Activated CD8-positive, alpha-beta T cell treated with anti-CD3 and anti-CD28 coated beads, Interleukin-2, amount 10 ng/mL, durations not matched to agents 7 days and 5 days (primary cell): ENCODE measurements at regions of chr12 and their contacts with region 1.

Region 1: DNA sequence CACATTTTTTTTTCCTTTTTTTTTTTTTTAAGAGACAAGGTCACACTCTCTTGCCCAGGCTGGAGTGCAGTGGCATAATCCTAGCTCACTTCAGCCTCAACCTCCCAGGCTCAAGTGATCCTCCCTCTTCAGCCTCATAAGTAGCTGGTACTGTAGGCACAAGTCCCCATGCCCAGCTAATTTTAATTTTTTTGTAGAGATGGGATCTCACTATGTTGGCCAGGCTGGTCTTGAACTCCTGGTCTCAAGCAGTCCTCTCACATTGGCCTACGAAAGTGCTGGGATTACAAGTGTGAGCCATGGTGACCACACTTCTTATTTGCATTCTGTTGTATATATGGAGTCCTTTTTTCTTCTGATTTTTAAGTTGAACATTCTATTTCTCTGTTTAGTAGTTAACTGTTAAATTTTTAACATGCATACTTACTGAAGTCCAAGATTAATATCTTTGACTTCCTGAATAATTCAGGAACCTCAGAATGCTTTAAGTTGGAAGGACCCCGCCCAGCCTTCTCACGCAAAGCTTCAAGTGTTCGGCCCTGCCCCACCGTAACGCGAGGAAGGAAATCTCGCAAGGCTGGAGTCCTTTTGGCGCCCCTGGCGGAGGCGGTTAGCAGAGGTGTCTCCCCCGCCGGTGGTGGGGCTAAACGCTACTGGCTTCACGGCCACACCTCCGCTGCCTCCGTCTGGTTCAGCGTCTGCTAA is 21.6 kb downstream of the SPATS2 start:
- DNase-seq: peak; percentile 80
- ATAC-seq: peak; percentile 94
- H3K4me3 Mint-ChIP-seq: no peak overlapping the region
- H3K27ac Mint-ChIP-seq: no peak overlapping the region
- H3K4me1 Mint-ChIP-seq: peaks cover 6% of the 10 kb centered on the region
- H3K27me3 Mint-ChIP-seq: peaks cover 2% of the 10 kb centered on the region

Region 2: DNA sequence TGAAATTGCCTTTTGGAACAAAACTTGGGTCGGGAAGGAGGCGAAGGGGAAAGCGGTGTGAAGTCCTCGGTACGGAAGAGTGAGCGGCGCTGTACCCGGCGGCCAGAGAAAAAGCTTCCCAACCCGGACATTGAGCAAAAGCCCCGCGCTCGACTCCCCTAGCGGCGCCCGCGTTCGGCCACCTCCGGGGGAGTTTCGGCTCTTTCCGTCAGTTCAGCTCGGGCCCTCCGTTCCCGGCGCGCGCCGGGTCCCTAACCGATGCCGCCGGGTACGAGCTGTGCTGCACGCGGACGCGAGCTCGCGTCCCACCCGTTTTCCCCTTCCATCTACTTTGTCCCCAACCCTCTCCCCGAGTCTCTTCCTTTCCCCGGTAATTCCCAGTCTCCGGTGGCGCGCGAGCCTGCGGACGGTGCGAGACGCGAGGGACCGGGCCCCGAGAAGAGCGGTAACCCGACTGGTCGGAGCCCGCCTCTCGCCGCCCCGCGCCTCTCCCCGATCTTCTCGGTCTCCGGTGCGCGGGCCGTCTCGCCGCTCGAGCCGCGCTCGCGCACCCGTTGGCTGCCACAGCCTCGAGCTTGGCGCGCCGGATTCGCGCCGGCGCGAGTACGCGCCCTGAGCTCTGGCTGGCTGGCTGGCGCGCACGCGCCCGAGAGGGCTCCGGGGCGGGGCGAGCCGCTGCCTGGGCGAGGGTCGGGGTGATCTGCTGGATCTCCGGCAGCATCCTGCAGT is 22.0 kb before region 1 on chr12:
- CTCF ChIA-PET with region 1: interaction called, 16 read pairs
- POLR2A ChIA-PET with region 1: interaction called, 3 read pairs
- DNase-seq: peak; percentile 90
- ATAC-seq: peak; percentile 89
- H3K4me3 Mint-ChIP-seq: peak overlapping the region; percentile 97
- H3K27ac Mint-ChIP-seq: peak overlapping the region; percentile 98
- H3K4me1 Mint-ChIP-seq: peaks cover 38% of the 10 kb centered on the region
- H3K27me3 Mint-ChIP-seq: no peaks in the 10 kb centered on the region

Region 3: GRCh38 chr12:49400304-49400703 is 11.5 kb after region 1 on chr12:
- CTCF ChIA-PET with region 1: interaction called, 15 read pairs
- POLR2A ChIA-PET with region 1: no interaction called
- DNase-seq: no peak
- ATAC-seq: no peak
- H3K4me3 Mint-ChIP-seq: no peak overlapping the region
- H3K27ac Mint-ChIP-seq: no peak overlapping the region
- H3K4me1 Mint-ChIP-seq: peaks cover 11% of the 10 kb centered on the region
- H3K27me3 Mint-ChIP-seq: no peaks in the 10 kb centered on the region

Region 4: GRCh38 chr12:49470986-49471385 is 82.2 kb after region 1 on chr12:
- CTCF ChIA-PET with region 1: no interaction called
- POLR2A ChIA-PET with region 1: no interaction called
- DNase-seq: no peak
- ATAC-seq: no peak
- H3K4me3 Mint-ChIP-seq: no peak overlapping the region
- H3K27ac Mint-ChIP-seq: no peak overlapping the region
- H3K4me1 Mint-ChIP-seq: no peaks in the 10 kb centered on the region
- H3K27me3 Mint-ChIP-seq: no peaks in the 10 kb centered on the region

Region 5: DNA sequence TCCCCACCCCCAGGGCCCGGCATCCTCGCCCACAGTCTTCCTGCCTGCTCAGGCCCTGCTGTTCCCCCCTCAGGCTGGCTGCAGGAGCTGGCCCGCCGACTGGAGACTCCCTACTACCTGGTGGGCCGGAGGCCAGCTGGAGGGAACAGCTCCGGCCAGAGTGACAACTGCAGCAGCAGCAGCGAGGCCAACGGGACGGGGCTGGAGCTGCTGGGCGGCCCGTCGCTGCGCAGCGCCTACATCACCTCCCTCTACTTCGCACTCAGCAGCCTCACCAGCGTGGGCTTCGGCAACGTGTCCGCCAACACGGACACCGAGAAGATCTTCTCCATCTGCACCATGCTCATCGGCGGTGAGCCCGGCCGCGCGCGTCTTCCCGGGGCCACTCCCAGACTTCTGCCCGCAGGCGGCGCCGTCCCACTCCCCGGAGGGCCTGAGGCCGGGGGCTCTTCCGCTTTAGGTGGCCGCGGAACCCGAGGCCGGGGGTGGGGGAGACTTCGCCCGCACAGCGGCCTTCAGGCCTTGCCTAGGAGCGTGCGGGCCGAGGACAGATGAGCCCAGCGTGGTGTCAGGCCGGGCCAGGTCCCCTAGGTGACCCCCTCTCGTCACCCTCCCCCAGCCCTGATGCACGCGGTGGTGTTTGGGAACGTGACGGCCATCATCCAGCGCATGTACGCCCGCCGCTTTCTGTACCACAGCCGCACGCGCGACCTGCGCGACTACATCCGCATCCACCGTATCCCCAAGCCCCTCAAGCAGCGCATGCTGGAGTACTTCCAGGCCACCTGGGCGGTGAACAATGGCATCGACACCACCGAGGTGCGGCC is 160.2 kb after region 1 on chr12:
- CTCF ChIA-PET with region 1: no interaction called
- POLR2A ChIA-PET with region 1: no interaction called
- DNase-seq: peak; percentile 38
- ATAC-seq: peak; percentile 57
- H3K4me3 Mint-ChIP-seq: peak overlapping the region; percentile 73
- H3K27ac Mint-ChIP-seq: peak overlapping the region; percentile 79
- H3K4me1 Mint-ChIP-seq: peaks cover 28% of the 10 kb centered on the region
- H3K27me3 Mint-ChIP-seq: peaks cover 13% of the 10 kb centered on the region